Colonic mucosa (tissue), 4 donors: ENCODE measurements at regions of chr21 and their contacts with region 1.

Region 1: GRCh38 chr21:32257962-32258785 is 20.7 kb downstream of the MIS18A start:
- DNase-seq: peak; percentile 67
- H3K4me3 ChIP-seq: no peak overlapping the region
- H3K27ac ChIP-seq: no peak overlapping the region
- H3K4me1 ChIP-seq: no peaks in the 10 kb centered on the region
- H3K27me3 ChIP-seq: no peaks in the 10 kb centered on the region
- CTCF ChIP-seq: peak; percentile 66

Region 2: DNA sequence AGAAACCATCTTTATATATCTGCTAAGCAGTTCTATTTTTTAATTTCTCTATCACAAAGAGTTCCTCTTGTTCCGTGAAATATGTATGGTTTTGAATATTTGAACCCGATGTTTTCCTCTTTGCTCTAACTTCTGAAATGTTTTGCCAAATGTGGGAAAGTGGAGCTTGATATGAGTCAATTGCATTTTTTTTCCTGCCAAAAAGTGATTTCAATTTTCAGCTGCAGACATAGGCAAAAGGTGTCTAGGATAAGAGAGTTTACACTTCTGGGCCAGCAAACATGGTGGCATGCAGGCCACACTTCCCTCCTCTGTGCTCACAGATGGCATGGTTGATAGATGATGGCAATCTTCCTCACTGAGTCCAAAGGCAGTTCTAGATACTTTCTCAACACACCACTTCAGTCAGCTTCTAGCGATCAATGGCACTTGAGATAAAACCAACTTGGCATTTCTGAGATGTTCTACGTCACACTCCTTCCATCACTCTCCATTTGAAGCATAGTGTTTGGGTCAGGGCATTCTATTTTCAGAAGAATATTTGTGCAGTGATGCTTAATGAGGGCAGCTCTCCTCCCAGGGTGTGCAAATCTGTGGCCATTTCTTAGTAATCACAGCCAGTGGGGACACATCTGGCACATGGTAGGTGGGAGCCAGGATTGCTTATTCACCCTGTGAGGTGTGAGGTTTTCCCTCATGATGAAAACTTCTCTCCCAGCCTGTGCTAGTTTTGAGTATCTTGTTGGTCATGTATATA is 471.8 kb before region 1 on chr21:
- intact Hi-C with region 1: loop called (anchors 2 kb)
- DNase-seq: no peak
- H3K4me3 ChIP-seq: no peak overlapping the region
- H3K27ac ChIP-seq: no peak overlapping the region
- H3K4me1 ChIP-seq: no peaks in the 10 kb centered on the region
- H3K27me3 ChIP-seq: no peaks in the 10 kb centered on the region
- CTCF ChIP-seq: peak; percentile 4

Region 3: DNA sequence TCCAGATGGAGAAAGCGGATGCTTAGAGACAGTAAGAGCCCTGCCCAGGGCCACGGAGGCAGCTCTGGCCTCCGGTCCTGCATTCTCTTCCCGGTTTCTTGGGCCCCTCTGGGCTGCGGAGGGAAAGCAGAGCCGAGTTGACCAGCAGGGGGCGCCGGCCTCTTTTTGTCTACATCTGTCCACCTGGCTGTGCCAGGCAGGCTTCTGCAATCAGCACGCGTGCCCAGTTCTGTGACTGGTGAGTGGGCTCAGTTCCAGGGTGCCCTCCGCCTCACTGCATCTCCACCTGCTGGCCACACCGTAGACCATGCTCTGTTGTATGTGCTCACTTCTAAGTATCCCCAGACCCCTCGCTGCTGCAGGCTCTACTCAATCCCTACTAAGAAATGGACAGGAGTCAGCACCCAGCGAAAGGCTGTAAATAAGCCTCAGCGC is 392.1 kb before region 1 on chr21:
- intact Hi-C with region 1: loop called (anchors 2 kb)
- DNase-seq: peak; percentile 90
- H3K4me3 ChIP-seq: no peak overlapping the region
- H3K27ac ChIP-seq: no peak overlapping the region
- H3K4me1 ChIP-seq: no peaks in the 10 kb centered on the region
- H3K27me3 ChIP-seq: no peaks in the 10 kb centered on the region
- CTCF ChIP-seq: peak; percentile 88